Caco-2 (cell line): ENCODE measurements at regions of chr6 and their contacts with region 1.

Region 1: GRCh38 chr6:85354761-85355618 is 94.9 kb upstream of the NT5E start:
- DNase-seq: peak; percentile 62 to 74
- H3K4me3 ChIP-seq: no peak overlapping the region
- H3K4me3 Mint-ChIP-seq: no peak overlapping the region
- H3K27ac Mint-ChIP-seq: no peak overlapping the region
- H3K4me1 ChIP-seq: no peaks in the 10 kb centered on the region
- H3K4me1 Mint-ChIP-seq: no peaks in the 10 kb centered on the region
- H3K27me3 ChIP-seq: no peaks in the 10 kb centered on the region
- H3K27me3 Mint-ChIP-seq: no peaks in the 10 kb centered on the region
- CTCF ChIP-seq: peak; percentile 91 to 93

Region 2: GRCh38 chr6:85107701-85108100 is 247.3 kb before region 1 on chr6:
- CTCF ChIA-PET with region 1: no interaction called
- POLR2A ChIA-PET with region 1: no interaction called
- intact Hi-C with region 1: no loop called
- DNase-seq: no peak
- H3K4me3 ChIP-seq: no peak overlapping the region
- H3K4me3 Mint-ChIP-seq: no peak overlapping the region
- H3K27ac Mint-ChIP-seq: no peak overlapping the region
- H3K4me1 ChIP-seq: no peaks in the 10 kb centered on the region
- H3K4me1 Mint-ChIP-seq: no peaks in the 10 kb centered on the region
- H3K27me3 ChIP-seq: no peaks in the 10 kb centered on the region
- H3K27me3 Mint-ChIP-seq: peaks cover 12% of the 10 kb centered on the region
- CTCF ChIP-seq: no peak

Region 3: DNA sequence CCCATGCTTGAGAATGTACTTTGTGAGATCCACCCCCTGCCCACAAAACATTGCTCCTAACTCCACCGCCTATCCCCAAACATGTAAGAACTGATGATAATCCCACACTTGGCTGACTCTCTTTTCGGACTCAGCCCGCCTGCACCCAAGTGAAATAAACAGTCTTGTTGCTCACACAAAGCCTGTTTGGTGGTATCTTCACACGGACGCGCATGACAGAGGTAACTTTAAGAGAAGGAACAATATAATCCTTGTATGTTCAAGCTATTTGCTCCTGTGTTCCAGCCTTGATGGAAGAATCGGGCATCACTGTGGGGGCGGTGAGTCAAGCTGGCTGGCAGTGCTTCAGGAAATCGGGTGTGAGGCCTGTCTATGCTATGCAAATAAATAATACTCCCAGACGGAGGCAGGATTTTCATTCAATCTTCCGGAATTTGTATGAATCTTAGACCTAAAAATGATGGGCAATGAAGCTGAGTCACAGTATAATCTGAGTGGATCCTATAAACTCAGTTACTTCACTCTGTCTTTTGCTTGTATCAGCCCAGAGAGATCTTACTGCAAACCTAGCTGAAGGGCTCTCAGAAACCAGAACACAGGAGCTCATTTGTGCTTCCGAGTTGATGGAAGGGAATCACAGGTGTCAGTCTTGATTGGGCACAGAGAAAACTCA is 49.6 kb after region 1 on chr6:
- CTCF ChIA-PET with region 1: interaction called, 3 read pairs
- POLR2A ChIA-PET with region 1: no interaction called
- intact Hi-C with region 1: loop called (anchors 2 kb)
- DNase-seq: peak in 1 of 2 experiments; percentile 17
- H3K4me3 ChIP-seq: no peak overlapping the region
- H3K4me3 Mint-ChIP-seq: peak overlapping the region; percentile 68
- H3K27ac Mint-ChIP-seq: peak overlapping the region; percentile 95
- H3K4me1 ChIP-seq: peaks cover 54% of the 10 kb centered on the region
- H3K4me1 Mint-ChIP-seq: peaks cover 47% of the 10 kb centered on the region
- H3K27me3 ChIP-seq: no peaks in the 10 kb centered on the region
- H3K27me3 Mint-ChIP-seq: no peaks in the 10 kb centered on the region
- CTCF ChIP-seq: no peak

Region 4: GRCh38 chr6:85436411-85436810 is 81.4 kb after region 1 on chr6:
- CTCF ChIA-PET with region 1: no interaction called
- POLR2A ChIA-PET with region 1: no interaction called
- intact Hi-C with region 1: no loop called
- DNase-seq: no peak
- H3K4me3 ChIP-seq: no peak overlapping the region
- H3K4me3 Mint-ChIP-seq: no peak overlapping the region
- H3K27ac Mint-ChIP-seq: no peak overlapping the region
- H3K4me1 ChIP-seq: no peaks in the 10 kb centered on the region
- H3K4me1 Mint-ChIP-seq: no peaks in the 10 kb centered on the region
- H3K27me3 ChIP-seq: no peaks in the 10 kb centered on the region
- H3K27me3 Mint-ChIP-seq: no peaks in the 10 kb centered on the region
- CTCF ChIP-seq: no peak

Region 5: DNA sequence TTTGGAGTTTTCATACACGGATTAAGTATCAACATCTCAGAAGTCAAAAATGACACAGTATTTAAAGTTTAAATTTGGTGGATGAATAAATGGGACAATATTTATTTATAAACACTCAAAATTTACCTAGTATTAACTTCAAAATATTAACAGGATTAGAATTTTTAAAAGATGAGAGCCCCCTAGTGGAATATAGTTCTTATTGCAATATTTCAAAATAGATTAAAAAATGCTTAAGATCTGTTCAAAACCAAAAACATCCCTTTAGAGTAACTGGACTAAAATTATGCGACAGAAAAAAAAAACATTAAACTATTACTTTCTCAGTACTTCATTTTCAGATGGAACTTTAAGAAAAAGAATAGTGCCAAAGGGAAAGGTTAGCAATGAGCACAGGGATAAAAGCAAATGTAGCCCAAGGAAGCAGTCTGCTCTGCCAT is 182.1 kb after region 1 on chr6:
- CTCF ChIA-PET with region 1: no interaction called
- POLR2A ChIA-PET with region 1: no interaction called
- intact Hi-C with region 1: loop called (anchors 1 kb)
- DNase-seq: no peak
- H3K4me3 ChIP-seq: no peak overlapping the region
- H3K4me3 Mint-ChIP-seq: no peak overlapping the region
- H3K27ac Mint-ChIP-seq: no peak overlapping the region
- H3K4me1 ChIP-seq: no peaks in the 10 kb centered on the region
- H3K4me1 Mint-ChIP-seq: no peaks in the 10 kb centered on the region
- H3K27me3 ChIP-seq: no peaks in the 10 kb centered on the region
- H3K27me3 Mint-ChIP-seq: no peaks in the 10 kb centered on the region
- CTCF ChIP-seq: peak; percentile 26 to 39

Region 6: DNA sequence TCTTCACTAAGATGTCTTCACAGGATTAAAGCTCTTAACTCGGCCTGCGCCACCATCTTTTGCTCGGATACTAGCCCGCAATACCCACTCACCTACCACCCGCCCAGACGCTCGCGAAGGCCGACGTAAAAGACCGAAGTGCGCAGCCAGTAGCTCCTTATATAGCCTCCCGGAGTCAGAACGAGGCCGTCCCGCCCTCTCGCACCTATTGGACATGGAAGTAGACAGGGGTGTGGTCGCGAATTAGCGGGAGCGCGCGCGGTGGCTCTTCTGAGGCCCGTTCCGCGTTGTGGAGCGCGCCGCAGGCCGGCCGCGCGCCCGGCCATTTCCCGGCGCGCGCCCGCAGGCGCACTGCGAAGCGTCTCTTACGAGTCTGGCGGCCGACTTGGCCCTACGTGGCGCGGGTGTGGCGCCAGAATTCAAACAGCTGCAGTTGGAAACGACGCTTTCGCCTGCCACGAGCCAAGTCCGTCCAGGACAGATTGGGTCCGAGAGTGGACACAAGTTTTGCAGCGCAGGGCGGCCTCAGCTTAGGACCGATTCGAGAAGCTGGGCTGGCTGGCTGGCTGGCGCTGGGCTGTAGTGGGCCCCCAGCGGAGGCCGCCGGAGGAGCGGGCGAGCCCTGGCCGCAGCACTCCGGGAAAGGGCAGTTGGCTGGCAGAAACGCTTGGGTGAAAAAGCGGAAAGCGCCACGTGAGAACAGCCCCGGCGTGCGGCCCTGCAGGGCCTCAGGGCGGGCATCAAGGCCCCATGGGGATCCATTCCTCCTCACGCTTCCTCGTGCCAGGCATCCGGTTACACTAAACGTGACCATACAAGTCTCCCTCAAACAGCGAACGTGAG is 323.8 kb after region 1 on chr6:
- CTCF ChIA-PET with region 1: no interaction called
- POLR2A ChIA-PET with region 1: no interaction called
- intact Hi-C with region 1: loop called (anchors 5 kb)
- DNase-seq: peak; percentile 97
- H3K4me3 ChIP-seq: peak overlapping the region; percentile 89
- H3K4me3 Mint-ChIP-seq: peak overlapping the region; percentile 99
- H3K27ac Mint-ChIP-seq: peak overlapping the region; percentile 98
- H3K4me1 ChIP-seq: no peaks in the 10 kb centered on the region
- H3K4me1 Mint-ChIP-seq: peaks cover 26% of the 10 kb centered on the region
- H3K27me3 ChIP-seq: no peaks in the 10 kb centered on the region
- H3K27me3 Mint-ChIP-seq: peaks cover 2% of the 10 kb centered on the region
- CTCF ChIP-seq: no peak